GM23248 (cell line): ENCODE measurements at regions of chr18 and their contacts with region 1.

Region 1: GRCh38 chr18:14086458-14087231 is 45.6 kb downstream of the ZNF519 start:
- DNase-seq: peak; percentile 72
- H3K4me3 ChIP-seq: no peak overlapping the region
- H3K27ac ChIP-seq: no peak overlapping the region
- H3K4me1 ChIP-seq: no peaks in the 10 kb centered on the region
- H3K27me3 ChIP-seq: no peaks in the 10 kb centered on the region

Region 2: GRCh38 chr18:13826211-13826610 is 260.4 kb before region 1 on chr18:
- in situ Hi-C with region 1: loop called (anchors 5 kb)
- DNase-seq: no peak
- H3K4me3 ChIP-seq: no peak overlapping the region
- H3K27ac ChIP-seq: no peak overlapping the region
- H3K4me1 ChIP-seq: no peaks in the 10 kb centered on the region
- H3K27me3 ChIP-seq: peaks cover 18% of the 10 kb centered on the region; the same call in 1 of the 2 replicates